WTC11 (cell line): ENCODE measurements at regions of chr11 and their contacts with region 1.

Region 1: DNA sequence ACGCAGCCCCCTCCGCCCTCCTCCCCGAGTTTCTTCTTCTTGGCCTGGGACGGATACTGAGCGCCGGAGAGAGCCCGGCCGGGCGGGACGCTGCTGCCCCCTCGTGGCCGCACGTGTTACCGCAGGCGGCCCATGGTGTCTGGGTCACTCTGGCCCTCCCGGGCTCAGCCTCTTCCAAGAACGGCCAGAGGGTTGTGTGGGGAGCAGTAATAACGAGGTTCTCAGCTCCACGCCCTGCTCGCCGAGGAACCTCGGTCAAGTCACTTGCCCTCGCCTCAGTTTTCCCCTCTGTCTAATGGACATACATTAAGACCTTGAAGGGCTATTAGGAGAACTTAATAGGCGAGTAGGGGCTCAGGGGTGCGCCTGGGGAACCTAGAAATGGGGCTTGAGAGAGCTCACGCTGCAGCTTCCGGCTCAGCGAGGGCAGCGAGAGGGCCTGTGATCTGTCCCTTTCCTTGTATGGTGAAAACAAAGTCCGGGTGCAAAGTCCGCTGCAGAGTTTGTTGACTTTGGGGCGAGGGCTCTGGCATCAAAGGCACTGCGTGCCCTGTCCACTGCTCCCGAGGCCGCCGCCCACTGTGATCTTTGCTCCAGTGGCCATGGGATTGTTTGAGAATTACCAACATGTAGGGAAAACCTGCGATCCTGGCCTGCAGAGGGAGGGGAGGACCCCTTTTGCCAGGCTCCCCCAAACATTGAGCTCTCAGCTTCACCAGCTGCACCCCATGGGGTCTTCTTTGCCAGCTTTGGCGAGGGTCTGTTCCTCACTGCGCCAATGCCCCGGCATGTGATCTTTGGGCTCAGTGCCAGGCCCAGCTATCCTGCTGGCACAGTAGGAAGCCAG is 14.4 kb upstream of the LRP5 start:
- DNase-seq: peak; percentile 87
- ATAC-seq: peak; percentile 98
- H3K4me3 Mint-ChIP-seq: no peak overlapping the region
- H3K27ac Mint-ChIP-seq: no peak overlapping the region
- H3K4me1 Mint-ChIP-seq: no peaks in the 10 kb centered on the region
- H3K27me3 Mint-ChIP-seq: peaks cover 2% of the 10 kb centered on the region; the same call in 1 of the 2 replicates
- CTCF ChIP-seq: peak; percentile 98

Region 2: DNA sequence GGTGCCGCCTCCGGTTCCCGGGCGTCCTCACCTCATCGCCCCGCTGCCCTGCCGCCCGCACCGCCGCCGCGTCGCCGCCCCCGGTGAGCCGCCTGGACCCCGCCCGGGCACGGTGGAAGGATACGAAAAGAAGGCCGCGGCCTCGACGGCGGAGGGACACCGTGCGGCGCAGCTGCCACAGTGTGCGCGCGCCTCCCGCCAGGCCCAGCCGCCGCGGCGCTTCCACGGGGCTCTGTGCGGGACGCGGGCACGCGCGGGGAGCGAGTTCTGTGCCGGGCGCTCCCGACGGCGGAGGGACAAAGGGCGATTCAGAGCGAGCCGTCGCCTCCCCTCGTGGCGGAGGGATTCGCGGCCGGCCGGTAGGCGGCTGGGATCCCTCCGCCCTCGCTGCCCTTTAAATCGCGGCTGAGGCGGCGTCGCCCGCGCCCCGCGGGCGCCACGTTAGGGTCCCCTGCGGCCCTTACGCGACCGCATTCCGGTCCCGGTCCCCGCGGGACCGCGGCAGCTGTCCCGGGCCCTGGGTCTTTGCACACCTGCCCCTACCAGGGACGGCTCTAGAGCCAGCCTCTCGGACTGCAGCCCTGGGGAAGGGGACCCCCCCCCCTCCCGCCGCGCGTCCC is 84.4 kb before region 1 on chr11:
- CTCF ChIA-PET with region 1: interaction called, 27 read pairs
- POLR2A ChIA-PET with region 1: no interaction called
- DNase-seq: peak; percentile 78
- ATAC-seq: peak; percentile 9
- H3K4me3 Mint-ChIP-seq: peak overlapping the region; percentile 57
- H3K27ac Mint-ChIP-seq: no peak overlapping the region
- H3K4me1 Mint-ChIP-seq: peaks cover 44% of the 10 kb centered on the region
- H3K27me3 Mint-ChIP-seq: peaks cover 9% of the 10 kb centered on the region
- CTCF ChIP-seq: no peak

Region 3: GRCh38 chr11:68257475-68258362 is 40.3 kb before region 1 on chr11:
- CTCF ChIA-PET with region 1: interaction called, 111 read pairs
- POLR2A ChIA-PET with region 1: interaction called, 3 read pairs
- DNase-seq: peak; percentile 99
- ATAC-seq: peak; percentile 92
- H3K4me3 Mint-ChIP-seq: no peak overlapping the region
- H3K27ac Mint-ChIP-seq: no peak overlapping the region
- H3K4me1 Mint-ChIP-seq: peaks cover 12% of the 10 kb centered on the region
- H3K27me3 Mint-ChIP-seq: peaks cover 9% of the 10 kb centered on the region
- CTCF ChIP-seq: peak; percentile 79

Region 4: DNA sequence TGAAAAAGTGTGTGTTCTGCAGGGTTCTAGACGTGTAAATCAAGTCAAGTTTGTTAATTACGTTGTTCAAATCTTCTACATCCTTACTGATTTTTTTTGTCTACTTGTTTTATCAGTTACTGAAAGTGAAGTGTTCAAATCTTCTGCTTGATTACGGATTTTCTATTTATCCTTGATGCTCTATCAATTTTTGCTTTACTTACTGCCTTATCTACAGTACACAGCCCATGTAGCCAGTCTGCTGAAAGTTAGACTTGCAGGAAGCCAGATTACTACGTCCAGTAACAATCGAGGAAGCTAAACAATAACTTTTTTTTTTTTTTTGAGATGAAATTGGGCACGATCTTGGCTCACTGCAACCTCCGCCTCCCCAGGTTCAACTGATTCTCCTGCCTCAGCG is 10.6 kb before region 1 on chr11:
- CTCF ChIA-PET with region 1: interaction called, 10 read pairs
- POLR2A ChIA-PET with region 1: no interaction called
- DNase-seq: no peak
- ATAC-seq: no peak
- H3K4me3 Mint-ChIP-seq: no peak overlapping the region
- H3K27ac Mint-ChIP-seq: no peak overlapping the region
- H3K4me1 Mint-ChIP-seq: no peaks in the 10 kb centered on the region
- H3K27me3 Mint-ChIP-seq: peaks cover 14% of the 10 kb centered on the region
- CTCF ChIP-seq: no peak

Region 5: GRCh38 chr11:68321293-68322041 is 23.4 kb after region 1 on chr11:
- CTCF ChIA-PET with region 1: interaction called, 24 read pairs
- POLR2A ChIA-PET with region 1: interaction called, 4 read pairs
- DNase-seq: no peak
- ATAC-seq: no peak
- H3K4me3 Mint-ChIP-seq: no peak overlapping the region
- H3K27ac Mint-ChIP-seq: no peak overlapping the region
- H3K4me1 Mint-ChIP-seq: peaks cover 33% of the 10 kb centered on the region
- H3K27me3 Mint-ChIP-seq: no peaks in the 10 kb centered on the region
- CTCF ChIP-seq: no peak